Gastrocnemius medialis (tissue), 4 donors: ENCODE measurements at regions of chr1 and their contacts with region 1.

Region 1: GRCh38 chr1:213122514-213122929 is 71.5 kb downstream of the RPS6KC1 start:
- DNase-seq: no peak
- ATAC-seq: no peak
- H3K4me3 ChIP-seq: no peak overlapping the region
- H3K27ac ChIP-seq: no peak overlapping the region
- H3K4me1 ChIP-seq: peaks cover 0 to 8% of the 10 kb centered on the region in 2 donors
- H3K27me3 ChIP-seq: no peaks in the 10 kb centered on the region
- CTCF ChIP-seq: peak; percentile 25 to 72 (median 31)
- POLR2A ChIP-seq: no peak

Region 2: GRCh38 chr1:213244664-213245091 is 122.2 kb after region 1 on chr1:
- in situ Hi-C with region 1: no loop called
- intact Hi-C with region 1: loop called (anchors 10 kb)
- DNase-seq: no peak
- ATAC-seq: no peak
- H3K4me3 ChIP-seq: no peak overlapping the region
- H3K27ac ChIP-seq: no peak overlapping the region
- H3K4me1 ChIP-seq: no peaks in the 10 kb centered on the region
- H3K27me3 ChIP-seq: no peaks in the 10 kb centered on the region
- CTCF ChIP-seq: peak; percentile 46 to 76 (median 62)
- POLR2A ChIP-seq: no peak

Region 3: GRCh38 chr1:213374369-213374768 is 251.8 kb after region 1 on chr1:
- in situ Hi-C with region 1: no loop called
- intact Hi-C with region 1: loop called (anchors 10 kb)
- DNase-seq: peak in 1 of 2 donors; percentile 17
- ATAC-seq: peak; percentile 66 to 68
- H3K4me3 ChIP-seq: no peak overlapping the region
- H3K27ac ChIP-seq: no peak overlapping the region
- H3K4me1 ChIP-seq: no peaks in the 10 kb centered on the region
- H3K27me3 ChIP-seq: no peaks in the 10 kb centered on the region
- CTCF ChIP-seq: peak; percentile 53 to 78 (median 68)
- POLR2A ChIP-seq: no peak